ENCODE measurements at regions of chr5 and their contacts with region 1.

Region 1: GRCh38 chr5:151651997-151652645 is 34.6 kb downstream of the SPARC start:
- DNase-seq: peak; percentile 60 to 83
- H3K4me3 ChIP-seq: no peak overlapping the region
- H3K27ac ChIP-seq: no peak overlapping the region
- H3K4me1 ChIP-seq: peaks cover 13% of the 10 kb centered on the region
- H3K27me3 ChIP-seq: no peaks in the 10 kb centered on the region
- CTCF ChIP-seq: peak; percentile 94

Region 2: GRCh38 chr5:151051066-151051930 is 600.8 kb before region 1 on chr5:
- CTCF ChIA-PET with region 1: no interaction called
- POLR2A ChIA-PET with region 1: interaction called, 52 read pairs
- intact Hi-C with region 1: no loop called
- DNase-seq: peak; percentile 59 to 65
- H3K4me3 ChIP-seq: no peak overlapping the region
- H3K27ac ChIP-seq: no peak overlapping the region
- H3K4me1 ChIP-seq: peaks cover 25% of the 10 kb centered on the region
- H3K27me3 ChIP-seq: no peaks in the 10 kb centered on the region
- CTCF ChIP-seq: peak; percentile 92

Region 3: DNA sequence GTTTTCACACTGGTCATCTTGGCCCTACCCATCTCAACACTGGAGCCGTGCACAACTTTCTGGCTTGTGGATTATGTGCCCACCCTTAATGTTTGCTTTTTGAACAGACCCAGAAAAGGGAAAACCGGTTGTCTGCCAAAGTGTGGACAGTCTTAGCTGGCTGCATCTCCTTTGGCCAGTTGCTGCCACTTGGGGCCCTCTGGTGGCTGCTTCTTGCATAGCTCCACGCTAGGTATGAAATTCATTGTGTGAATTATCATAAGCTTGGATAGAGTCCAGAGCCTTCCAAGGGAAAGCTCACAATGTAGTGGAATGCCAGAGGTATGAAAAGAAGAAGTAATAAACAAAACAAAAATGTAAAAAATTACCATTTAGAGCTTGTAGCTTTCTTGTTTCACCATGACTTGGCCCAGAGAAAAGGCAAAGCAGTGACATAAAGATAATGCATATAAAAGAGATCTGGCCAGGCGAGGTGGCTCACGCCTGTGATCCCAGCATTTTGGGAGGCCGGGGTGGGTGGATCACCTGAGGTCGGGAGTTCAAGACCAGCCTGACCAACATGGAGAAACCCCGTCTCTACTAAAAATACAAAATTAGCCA is 336.0 kb before region 1 on chr5:
- CTCF ChIA-PET with region 1: no interaction called
- POLR2A ChIA-PET with region 1: no interaction called
- intact Hi-C with region 1: loop called (anchors 2 kb)
- DNase-seq: peak; percentile 55 to 78
- H3K4me3 ChIP-seq: no peak overlapping the region
- H3K27ac ChIP-seq: no peak overlapping the region
- H3K4me1 ChIP-seq: no peaks in the 10 kb centered on the region
- H3K27me3 ChIP-seq: peaks cover 7% of the 10 kb centered on the region; the same call in 1 of the 2 replicates
- CTCF ChIP-seq: peak; percentile 91

Region 4: DNA sequence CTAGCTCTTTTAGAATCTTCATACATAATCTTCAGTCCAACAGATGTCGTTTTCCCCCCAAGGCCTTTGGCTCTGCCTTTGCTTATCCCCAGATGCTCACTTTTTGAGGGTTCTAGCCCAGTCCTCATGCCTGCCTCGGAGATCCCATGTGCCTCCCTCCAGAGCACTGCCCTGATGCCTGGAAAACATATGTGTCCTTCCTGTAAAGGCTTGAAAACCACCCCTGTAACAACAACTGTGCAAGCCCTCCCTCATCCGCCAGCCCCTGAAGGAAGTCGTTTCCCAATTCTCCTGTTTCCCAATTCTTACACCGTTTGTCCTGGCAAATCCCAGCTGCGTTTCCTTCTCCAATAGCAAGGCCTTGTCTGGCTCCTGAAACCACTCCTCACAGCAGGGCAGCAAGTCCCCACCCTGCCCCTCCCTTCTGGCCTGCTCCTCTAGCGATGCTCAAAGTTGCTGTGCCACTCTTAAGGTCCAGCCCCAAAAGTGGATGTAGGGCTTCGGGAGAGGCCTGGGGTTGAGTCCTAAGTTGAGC is 152.6 kb before region 1 on chr5:
- CTCF ChIA-PET with region 1: interaction called, 5 read pairs
- POLR2A ChIA-PET with region 1: no interaction called
- intact Hi-C with region 1: loop called (anchors 2 kb)
- DNase-seq: no peak
- H3K4me3 ChIP-seq: no peak overlapping the region
- H3K27ac ChIP-seq: no peak overlapping the region
- H3K4me1 ChIP-seq: no peaks in the 10 kb centered on the region
- H3K27me3 ChIP-seq: no peaks in the 10 kb centered on the region
- CTCF ChIP-seq: no peak

Region 5: DNA sequence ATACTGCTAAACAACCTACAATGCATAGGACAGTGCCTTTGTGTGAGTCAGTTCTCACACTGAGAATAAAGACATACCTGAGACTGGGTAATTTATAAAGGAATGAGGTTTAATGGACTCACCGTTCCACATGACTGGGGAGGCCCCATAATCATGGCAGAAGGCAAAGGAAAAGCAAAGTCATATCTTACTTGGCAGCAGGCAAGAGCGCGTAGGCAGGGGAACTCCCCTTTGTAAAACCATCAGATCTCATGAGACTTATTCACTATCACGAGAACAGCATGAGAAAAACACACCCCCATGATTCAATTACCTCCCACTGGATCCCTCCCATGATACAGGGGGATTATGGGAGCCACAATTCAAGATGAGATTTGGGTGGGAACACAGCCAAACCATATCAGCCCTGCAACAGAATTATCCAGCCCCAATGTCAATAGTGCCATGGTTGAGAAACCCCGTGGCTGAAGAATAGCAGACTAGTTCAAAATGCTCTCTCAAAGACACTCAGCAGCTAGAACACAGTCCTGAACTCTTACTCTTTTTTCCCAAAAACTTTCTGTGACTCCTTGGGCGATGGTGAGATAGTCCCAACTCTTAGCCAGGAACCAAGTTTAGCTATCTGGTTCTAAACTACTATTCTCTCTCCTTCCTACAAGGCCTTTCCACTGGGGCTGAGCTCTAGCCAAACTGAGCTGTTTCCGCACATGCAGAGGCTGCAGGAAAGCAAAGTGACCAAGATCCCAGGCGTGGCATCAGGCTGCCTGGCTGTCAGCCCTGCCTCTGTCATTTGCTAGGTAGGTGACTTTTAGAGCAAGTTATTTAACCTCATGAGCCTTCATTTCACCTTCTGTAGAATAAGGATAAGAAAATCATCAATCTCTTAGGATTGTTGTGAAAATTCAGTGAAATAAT is 82.7 kb before region 1 on chr5:
- CTCF ChIA-PET with region 1: no interaction called
- POLR2A ChIA-PET with region 1: no interaction called
- intact Hi-C with region 1: loop called (anchors 5 kb)
- DNase-seq: no peak
- H3K4me3 ChIP-seq: no peak overlapping the region
- H3K27ac ChIP-seq: no peak overlapping the region
- H3K4me1 ChIP-seq: peaks cover 20% of the 10 kb centered on the region
- H3K27me3 ChIP-seq: peaks cover 7% of the 10 kb centered on the region; the same call in 1 of the 2 replicates
- CTCF ChIP-seq: no peak

Region 6: DNA sequence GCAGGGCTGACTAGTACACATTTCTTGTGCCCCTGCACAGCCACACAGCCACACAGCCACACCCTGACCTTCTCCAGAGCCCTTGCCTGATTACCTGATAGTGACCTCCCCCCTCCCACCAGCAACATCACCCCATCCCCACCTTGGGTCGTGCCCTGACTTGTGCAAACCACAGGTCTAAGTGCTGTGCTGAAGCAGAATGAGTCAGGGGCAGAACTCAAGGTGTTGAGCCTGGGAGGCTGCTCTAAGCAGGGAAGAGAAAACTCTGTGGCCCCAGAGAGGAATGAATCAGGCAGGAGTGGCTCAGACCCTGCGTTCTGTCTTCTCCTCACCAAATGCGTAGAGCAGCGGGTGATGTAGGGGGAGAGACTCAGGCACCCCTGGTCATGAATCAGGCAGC is 36.7 kb before region 1 on chr5:
- CTCF ChIA-PET with region 1: interaction called, 5 read pairs
- POLR2A ChIA-PET with region 1: no interaction called
- intact Hi-C with region 1: loop called (anchors 2 kb)
- DNase-seq: peak; percentile 81 to 84
- H3K4me3 ChIP-seq: no peak overlapping the region
- H3K27ac ChIP-seq: 0 out of 2 replicates have a peak overlapping the region, but pooled peaks have one; percentile 11
- H3K4me1 ChIP-seq: peaks cover 70% of the 10 kb centered on the region
- H3K27me3 ChIP-seq: no peaks in the 10 kb centered on the region
- CTCF ChIP-seq: no peak

Region 7: GRCh38 chr5:152739916-152740315 is 1087.8 kb after region 1 on chr5:
- CTCF ChIA-PET with region 1: no interaction called
- POLR2A ChIA-PET with region 1: no interaction called
- intact Hi-C with region 1: no loop called
- DNase-seq: no peak
- H3K4me3 ChIP-seq: no peak overlapping the region
- H3K27ac ChIP-seq: no peak overlapping the region
- H3K4me1 ChIP-seq: no peaks in the 10 kb centered on the region
- H3K27me3 ChIP-seq: no peaks in the 10 kb centered on the region
- CTCF ChIP-seq: no peak